HCT116 (cell line): ENCODE measurements at regions of chr17 and their contacts with region 1.

Region 1: DNA sequence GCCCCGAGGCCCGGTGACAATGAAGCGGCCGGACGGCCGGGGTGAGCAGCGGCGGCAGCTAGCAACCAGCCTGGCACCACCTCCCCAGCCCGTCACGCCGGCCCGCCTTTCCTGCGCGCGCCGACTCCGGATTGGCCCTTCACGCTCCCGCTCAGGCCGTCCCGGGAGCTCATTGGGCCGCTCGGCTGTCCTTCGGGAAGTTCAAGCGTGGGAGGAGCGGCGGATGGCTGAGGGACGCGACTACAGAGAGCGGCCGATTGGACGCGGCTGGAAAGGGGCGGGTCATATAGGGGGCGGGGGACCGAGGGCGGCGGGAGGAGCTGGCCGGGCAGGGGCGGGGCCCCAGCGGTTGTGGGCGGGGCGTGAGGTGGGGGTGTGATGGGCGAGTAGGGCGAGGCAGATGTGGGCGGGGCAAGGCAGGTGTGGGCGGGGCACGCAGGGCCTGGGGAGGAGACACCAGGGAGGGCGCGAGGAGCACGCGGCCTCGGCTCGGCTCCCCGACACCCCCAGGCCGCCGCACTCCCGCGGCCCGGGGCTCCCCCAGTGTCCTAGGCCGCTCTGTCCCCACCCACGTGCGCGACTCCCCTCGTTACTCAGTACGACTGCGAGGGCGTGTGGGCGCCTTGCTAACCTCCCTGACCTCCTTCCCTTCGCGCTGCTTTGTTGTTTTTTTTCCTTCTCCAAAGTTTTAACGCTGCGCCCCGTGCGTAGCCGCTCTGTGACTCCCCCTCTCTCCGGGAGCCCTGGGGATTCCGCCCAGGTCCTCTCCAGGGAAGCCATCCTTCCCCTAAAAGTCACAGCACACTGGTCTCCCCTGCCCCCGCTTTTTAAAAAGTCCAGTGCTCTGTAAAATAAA is at the start of gene CEP131:
- DNase-seq: peak; percentile 99
- ATAC-seq: peak; percentile 98
- H3K4me3 ChIP-seq: peak within 1 kb of the TSS; percentile 84 to 90
- H3K27ac ChIP-seq: peak within 1 kb of the TSS; percentile 74
- H3K4me1 ChIP-seq: peaks cover 20 to 29% of the 10 kb centered on the region in 2 experiments
- H3K27me3 ChIP-seq: no peaks in the 10 kb centered on the region
- CTCF ChIP-seq: no peak
- POLR2A ChIP-seq: peak; percentile 51
- RAD21 ChIP-seq: no peak
- total RNA-seq, gene CEP131: 30.2 TPM

Region 2: DNA sequence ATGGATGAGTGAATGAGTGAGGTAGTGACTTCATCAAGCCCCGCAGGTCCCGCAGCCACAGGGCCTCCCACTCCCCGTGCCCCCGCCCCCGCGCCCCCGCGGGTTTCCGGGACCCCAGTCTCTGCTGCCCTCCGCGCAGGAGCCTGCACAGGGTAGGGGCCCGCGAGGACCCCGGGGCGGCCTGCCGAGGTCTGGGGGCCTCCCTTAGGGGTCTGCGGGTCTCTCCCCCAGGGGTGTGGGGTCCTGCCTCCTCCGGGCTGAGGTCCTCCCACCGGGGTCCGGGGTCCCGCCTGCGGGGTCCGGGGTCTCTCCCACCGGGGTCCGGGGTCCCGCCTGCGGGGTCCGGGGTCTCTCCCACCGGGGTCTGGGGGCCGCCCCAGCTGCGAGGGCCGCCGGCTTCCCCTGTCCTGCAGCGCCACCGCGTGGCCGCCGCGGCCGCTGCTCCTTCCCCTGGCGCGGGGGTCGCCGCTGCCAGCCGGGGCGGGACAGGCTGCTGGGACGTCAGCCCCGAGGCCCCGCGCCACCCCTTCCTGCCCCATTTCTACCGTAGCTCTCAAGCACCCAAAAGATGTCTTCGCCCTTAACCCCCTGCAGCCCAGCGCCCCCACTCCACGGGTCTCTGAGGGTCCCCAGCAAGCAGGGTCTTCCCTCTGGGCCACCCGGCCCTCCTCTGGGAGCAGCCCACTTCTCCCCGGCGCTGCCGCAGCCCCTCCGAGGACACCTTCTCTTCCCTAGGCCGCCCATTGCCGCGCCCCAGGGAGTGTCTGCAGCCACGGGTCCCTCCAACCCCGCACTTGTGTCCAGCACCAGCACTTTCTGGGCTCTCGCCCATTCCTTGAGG is 241.9 kb before region 1 on chr17:
- CTCF ChIA-PET with region 1: no interaction called
- POLR2A ChIA-PET with region 1: interaction called, 3 read pairs
- RAD21 ChIA-PET with region 1: no interaction called
- intact Hi-C with region 1: loop called (anchors 10 kb)
- DNase-seq: no peak
- ATAC-seq: peak; percentile 57
- H3K4me3 ChIP-seq: no peak overlapping the region
- H3K27ac ChIP-seq: no peak overlapping the region; the same call in 1 of the 2 replicates
- H3K4me1 ChIP-seq: peaks cover 21 to 32% of the 10 kb centered on the region in 2 experiments
- H3K27me3 ChIP-seq: no peaks in the 10 kb centered on the region
- CTCF ChIP-seq: peak; percentile 59 to 95 (median 61)
- POLR2A ChIP-seq: no peak
- RAD21 ChIP-seq: peak; percentile 83

Region 3: GRCh38 chr17:81238817-81239600 is 15.9 kb after region 1 on chr17 and contains the starts of genes NDUFAF8 and TEPSIN:
- CTCF ChIA-PET with region 1: interaction called, 5 read pairs
- POLR2A ChIA-PET with region 1: interaction called, 9 read pairs
- RAD21 ChIA-PET with region 1: interaction called in 1 of 2 experiments, 3 read pairs
- intact Hi-C with region 1: loop called (anchors 1 kb)
- DNase-seq: peak; percentile 100
- ATAC-seq: peak; percentile 93
- H3K4me3 ChIP-seq: peak within 1 kb of the TSS; percentile 94 to 100
- H3K27ac ChIP-seq: peak within 1 kb of the TSS; percentile 86
- H3K4me1 ChIP-seq: peaks cover 12 to 35% of the 10 kb centered on the region in 2 experiments; a peak in 3 of 4 replicates
- H3K27me3 ChIP-seq: no peaks in the 10 kb centered on the region
- CTCF ChIP-seq: no peak
- POLR2A ChIP-seq: peak; percentile 24
- RAD21 ChIP-seq: no peak
- total RNA-seq, gene NDUFAF8: 102 TPM
- total RNA-seq, gene TEPSIN: 50.6 TPM